ENCODE measurements at regions of chr7 and their contacts with region 1.

Region 1: DNA sequence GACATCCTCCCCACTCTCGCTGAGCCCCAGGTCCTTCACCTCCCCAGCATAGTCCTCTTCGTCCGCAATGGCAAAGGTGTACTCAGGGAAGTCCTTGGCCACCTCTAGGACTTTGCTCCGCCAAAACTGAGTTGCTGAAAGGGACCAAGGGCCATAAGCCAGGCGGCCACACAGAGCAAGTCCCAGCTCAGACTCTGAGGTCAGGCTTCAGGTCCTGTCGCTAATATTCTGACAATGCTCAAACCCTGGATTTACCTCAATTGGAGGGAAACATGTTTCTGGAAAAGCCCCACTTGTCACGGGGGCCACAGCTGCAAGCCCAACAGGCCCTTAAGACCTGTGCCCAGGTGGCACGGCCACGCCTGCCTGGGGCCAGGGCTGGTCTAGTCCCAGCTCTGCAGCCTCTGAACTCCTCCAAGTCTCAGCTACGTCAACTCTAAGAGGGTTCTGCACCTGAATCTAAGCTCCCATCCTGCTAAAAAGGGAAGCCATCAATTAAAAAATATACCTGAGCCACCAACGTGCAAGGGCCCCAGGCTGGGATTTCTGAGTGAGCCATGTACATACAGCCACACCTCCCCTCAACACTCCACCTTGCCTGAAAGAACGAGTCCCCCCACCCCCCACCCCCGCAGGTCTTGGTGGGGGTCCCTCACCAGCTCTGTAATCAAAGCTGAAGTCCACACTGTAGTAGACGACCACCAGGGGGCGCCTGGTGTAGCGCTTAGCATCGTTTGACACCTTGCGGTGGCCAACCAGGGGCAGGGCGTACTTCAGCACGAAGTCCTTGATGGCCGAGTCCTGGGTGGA is 22.9 kb downstream of the PDIA4 start:
- DNase-seq: peak; percentile 49 to 66
- H3K4me3 ChIP-seq: no peak overlapping the region
- H3K27ac ChIP-seq: no peak overlapping the region
- H3K4me1 ChIP-seq: no peaks in the 10 kb centered on the region
- H3K27me3 ChIP-seq: no peaks in the 10 kb centered on the region
- CTCF ChIP-seq: peak in 2 of 3 donors; percentile 74 to 80
- POLR2A ChIP-seq: no peak

Region 2: DNA sequence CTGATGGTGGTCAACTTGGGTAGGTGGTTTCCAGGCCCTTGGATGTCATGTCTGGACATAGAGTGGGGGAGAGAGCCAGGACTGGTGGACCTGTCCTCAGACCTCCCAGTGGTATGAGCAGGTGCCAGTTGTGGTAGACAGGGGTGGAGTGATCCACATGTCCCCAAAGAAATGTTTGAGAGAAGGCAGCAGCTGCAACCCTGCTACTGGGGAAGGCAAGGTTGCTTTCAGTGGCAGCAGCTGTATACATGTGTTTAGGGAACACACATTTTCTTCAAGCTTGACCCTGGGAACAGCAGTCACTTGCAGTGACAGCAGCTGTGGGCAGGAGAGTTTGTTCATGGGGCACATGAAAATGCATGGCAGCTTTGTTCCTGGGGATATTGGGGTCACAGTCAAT is 1297.5 kb before region 1 on chr7:
- intact Hi-C with region 1: no loop called
- DNase-seq: no peak
- H3K4me3 ChIP-seq: no peak overlapping the region
- H3K27ac ChIP-seq: no peak overlapping the region
- H3K4me1 ChIP-seq: no peaks in the 10 kb centered on the region
- H3K27me3 ChIP-seq: no peaks in the 10 kb centered on the region
- CTCF ChIP-seq: no peak
- POLR2A ChIP-seq: no peak

Region 3: DNA sequence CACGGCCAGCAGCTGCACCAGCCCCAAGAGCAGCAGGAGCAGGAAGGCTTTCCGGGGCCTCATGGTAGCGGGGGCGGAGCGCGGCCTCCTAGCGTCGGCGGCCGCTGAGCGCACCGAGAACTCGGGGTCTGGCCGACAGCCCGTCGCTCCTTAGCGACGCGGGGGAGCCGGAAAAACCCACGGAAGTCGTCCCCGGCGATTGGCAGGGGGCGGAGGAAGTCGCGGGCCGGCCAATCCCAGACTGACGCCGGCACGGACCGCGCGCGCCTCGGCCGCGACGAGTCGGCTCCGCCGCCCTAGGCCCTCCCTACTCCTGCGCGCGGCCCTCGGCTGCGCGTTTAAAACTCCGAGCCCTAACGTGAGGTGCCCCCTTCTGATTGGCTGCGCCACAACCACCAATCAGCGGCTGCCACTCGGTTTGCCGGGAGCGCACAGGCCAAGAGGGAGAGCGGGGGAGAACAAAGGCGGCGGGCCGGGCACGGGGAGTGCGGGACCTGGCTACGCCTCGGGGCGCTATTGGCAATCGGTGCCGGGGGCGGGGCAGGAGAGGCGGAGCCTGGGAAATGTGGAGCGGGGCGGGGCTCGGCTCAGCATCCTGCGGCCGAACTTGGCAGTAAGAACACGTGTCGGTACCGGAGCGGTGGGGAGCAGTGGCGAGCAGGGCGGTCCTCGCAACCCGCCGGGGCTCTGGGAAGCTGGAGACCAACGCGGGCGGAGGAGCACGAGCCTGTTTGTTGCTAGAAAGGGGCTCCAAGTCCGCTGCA is 23.1 kb after region 1 on chr7 and contains the start of gene PDIA4:
- intact Hi-C with region 1: no loop called
- DNase-seq: peak; percentile 98 to 99
- H3K4me3 ChIP-seq: peak within 1 kb of the TSS; percentile 85 to 93 (median 91)
- H3K27ac ChIP-seq: peak within 1 kb of the TSS; percentile 85 to 96
- H3K4me1 ChIP-seq: no peaks in the 10 kb centered on the region
- H3K27me3 ChIP-seq: no peaks in the 10 kb centered on the region
- CTCF ChIP-seq: peak in 2 of 3 donors; percentile 33 to 56
- POLR2A ChIP-seq: peak; percentile 31
- total RNA-seq, gene PDIA4: 53.4 to 101 (median 68.3) TPM

Region 4: DNA sequence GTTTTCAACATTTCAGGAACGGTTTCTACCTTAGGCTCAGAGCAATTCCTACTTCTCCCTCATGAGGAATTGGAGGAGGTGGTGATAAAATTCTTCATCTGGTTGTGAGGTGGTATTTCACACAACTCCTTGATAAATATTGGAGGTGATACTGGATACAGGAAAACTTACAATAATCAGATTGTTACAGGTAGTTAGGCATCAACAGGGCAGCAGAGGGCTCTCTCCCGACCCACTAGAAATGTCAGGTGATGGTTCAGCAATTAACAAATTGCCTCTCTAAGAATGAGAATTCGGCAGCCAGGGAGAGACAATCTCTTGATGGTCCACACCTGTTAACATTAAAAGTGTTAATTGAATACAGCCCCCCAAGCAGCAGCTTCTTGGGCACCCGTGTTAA is 62.4 kb after region 1 on chr7:
- intact Hi-C with region 1: loop called (anchors 10 kb)
- DNase-seq: no peak
- H3K4me3 ChIP-seq: no peak overlapping the region
- H3K27ac ChIP-seq: no peak overlapping the region
- H3K4me1 ChIP-seq: no peaks in the 10 kb centered on the region
- H3K27me3 ChIP-seq: no peaks in the 10 kb centered on the region
- CTCF ChIP-seq: no peak
- POLR2A ChIP-seq: no peak

Region 5: DNA sequence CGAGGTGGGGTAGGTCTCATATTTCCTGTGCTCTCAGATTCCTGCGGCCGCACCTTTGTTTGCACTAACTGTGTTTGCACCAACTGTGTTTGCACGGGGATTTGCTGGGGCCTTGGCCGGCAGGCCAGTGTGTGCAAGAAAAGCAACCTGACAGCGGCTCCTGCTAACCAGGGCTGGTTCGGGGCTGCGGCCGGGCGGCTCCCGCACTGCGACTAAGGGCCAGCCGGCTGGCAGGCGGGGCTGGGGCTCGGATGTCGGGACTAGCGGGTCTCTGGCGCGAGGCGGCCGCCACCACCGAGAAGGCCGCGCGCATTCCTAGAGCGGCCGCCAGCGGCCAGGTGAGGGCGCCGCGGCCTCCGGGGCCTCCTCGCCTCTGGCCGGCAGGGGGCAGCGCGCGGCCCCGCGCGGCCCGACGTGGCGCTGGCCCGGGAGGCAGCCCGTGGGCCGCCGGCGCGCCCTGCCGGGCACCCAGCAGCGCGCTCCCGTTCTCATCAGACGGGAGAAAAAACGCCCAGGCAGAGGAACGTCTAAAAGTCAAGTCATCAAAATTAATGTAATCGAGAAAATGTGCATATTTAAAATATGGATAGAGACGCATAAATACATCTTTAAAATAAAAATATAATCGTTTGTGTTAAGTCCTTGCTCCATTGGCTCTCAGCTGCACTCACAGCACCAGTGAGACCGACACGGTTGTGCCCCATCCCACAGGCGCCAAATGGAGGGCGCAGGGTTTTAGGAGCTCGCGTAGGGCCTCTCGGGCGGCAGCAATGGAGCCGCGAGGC is 416.9 kb after region 1 on chr7:
- intact Hi-C with region 1: no loop called
- DNase-seq: no peak
- H3K4me3 ChIP-seq: peak overlapping the region; percentile 41 to 74 (median 52)
- H3K27ac ChIP-seq: peak overlapping the region in 1 of 2 donors; percentile 7
- H3K4me1 ChIP-seq: no peaks in the 10 kb centered on the region
- H3K27me3 ChIP-seq: no peaks in the 10 kb centered on the region
- CTCF ChIP-seq: peak in 1 of 3 donors; percentile 88
- POLR2A ChIP-seq: no peak